ENCODE measurements at regions of chr15 and their contacts with region 1.

Region 1: GRCh38 chr15:98518823-98519561 is 129.3 kb upstream of the IGF1R start:
- DNase-seq: peak; percentile 42
- H3K4me3 Mint-ChIP-seq: no peak overlapping the region
- H3K27ac Mint-ChIP-seq: no peak overlapping the region
- H3K4me1 Mint-ChIP-seq: peaks cover 4% of the 10 kb centered on the region
- H3K27me3 Mint-ChIP-seq: peaks cover 4% of the 10 kb centered on the region

Region 2: DNA sequence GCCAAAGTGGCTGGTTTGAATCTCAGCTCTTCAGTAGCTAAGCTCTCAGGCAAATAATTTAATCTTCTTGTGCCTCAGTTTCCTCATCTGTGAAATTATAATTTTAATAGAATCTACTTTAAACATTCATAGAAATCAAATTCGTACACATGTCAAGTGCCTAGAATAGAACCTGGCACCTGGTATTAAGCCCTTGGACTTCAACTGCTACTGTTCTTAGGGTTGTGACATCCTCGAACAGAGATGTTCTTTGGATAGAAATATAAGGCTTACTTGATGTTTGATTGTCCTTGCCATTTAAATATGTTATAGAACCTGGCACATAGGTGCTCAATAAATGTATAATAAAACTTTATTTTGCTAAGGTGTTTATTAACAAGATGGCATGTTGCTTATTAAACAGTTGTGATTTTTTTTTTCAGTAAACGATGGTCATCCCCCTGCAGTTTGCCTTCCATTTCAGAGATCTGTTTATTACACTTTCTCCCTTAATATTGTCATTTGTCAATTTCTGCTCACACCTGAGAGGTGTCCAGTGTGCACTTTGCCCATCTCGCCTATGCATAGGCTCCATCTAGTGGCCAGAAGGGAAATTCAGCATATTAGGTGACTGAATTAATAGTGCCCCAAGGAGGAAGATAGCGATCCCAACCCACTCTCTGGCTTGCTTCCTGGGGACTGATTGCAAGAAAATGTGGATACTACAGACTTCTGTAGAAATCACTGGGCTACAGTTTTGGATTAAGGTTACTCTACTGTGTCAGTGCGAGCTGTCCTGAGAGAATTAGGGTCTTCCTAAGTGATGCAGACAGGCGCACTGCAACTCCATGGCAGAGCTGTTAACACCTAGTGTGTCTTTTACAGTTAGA is 140.1 kb after region 1 on chr15:
- CTCF ChIA-PET with region 1: interaction called, 51 read pairs
- POLR2A ChIA-PET with region 1: no interaction called
- DNase-seq: peak; percentile 26
- H3K4me3 Mint-ChIP-seq: no peak overlapping the region
- H3K27ac Mint-ChIP-seq: no peak overlapping the region
- H3K4me1 Mint-ChIP-seq: no peaks in the 10 kb centered on the region
- H3K27me3 Mint-ChIP-seq: peaks cover 25% of the 10 kb centered on the region

Measured in activated CD4-positive, alpha-beta memory T cell treated with anti-CD3 and anti-CD28 coated beads, Interleukin-2, amount 10 ng/mL, durations not matched to agents 7 days and 5 days (primary cell).